Endothelial cell of umbilical vein (primary cell): ENCODE measurements at regions of chr11 and their contacts with region 1.

Region 1: DNA sequence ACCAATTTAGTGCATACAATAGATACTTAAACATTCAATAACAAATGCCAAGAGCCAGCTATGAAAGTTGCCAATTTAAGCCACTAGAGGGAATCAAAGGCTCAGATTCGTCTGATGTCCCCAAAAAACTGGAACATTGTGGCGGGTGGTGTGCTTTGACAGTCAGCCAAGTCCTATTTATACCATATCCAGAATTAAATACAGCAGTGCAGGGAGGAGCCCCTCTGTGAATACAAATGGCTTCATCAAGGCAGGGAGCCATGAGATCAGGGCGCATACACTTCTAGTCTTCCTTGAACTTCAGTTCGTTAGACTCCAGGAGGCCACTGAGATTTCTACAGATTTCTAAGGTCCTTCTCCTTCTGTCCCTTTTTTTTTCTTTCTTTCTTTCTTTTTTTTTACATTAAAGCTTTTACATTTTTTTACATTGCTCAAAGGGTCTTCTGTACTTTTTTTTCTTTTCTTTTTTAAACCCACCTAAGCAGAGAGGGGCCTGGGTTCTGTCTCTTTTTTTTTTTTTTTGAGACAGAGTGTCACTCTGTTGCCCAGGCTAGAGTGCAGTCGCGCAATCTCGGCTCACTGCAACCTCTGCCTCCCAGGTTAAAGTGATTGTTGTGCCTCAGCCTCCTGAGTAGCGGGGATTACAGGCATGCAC is 41.5 kb upstream of the HSPA8 start:
- DNase-seq: peak; percentile 75
- H3K4me3 ChIP-seq: no peak overlapping the region
- H3K27ac ChIP-seq: no peak overlapping the region
- H3K4me1 ChIP-seq: peaks cover 2% of the 10 kb centered on the region
- H3K27me3 ChIP-seq: no peaks in the 10 kb centered on the region
- CTCF ChIP-seq: peak; percentile 58 to 62
- POLR2A ChIP-seq: no peak

Region 2: DNA sequence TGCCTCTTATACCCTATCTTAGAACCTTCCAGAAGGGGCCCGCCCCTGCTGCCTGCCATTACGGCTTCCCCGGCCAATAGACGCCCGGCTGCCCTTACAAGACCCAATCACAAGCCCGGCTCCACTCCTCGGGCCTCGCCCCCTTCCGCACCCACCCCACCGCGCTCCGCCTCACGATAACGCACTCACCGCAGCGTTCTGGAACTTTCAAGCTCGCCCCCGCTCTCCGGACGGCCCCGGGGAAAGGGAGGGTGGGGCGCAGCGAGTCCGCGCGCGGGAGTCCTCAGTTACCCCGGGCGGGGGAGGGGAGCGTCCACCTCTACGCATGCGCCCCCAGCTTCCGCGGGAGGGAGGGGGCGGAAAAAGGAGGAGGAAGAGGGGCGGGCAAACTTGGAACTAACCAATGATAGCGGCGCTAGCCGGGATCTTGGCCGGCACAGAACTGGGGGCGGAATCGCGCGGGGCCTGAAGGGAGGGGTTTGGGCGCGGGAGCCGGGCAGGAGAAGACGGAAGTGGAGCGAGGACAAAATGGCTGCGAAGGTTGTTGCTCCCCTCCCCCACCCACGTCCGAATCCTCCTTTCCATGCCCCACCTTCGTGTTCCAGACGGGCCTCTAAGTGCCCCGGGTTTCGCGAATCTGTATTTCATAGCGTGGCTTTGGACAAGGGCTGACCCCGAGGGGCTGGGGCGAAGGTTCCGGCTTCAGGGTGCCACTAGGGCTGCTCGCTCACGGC is 41.1 kb before region 1 on chr11:
- CTCF ChIA-PET with region 1: interaction called, 10 read pairs
- POLR2A ChIA-PET with region 1: interaction called, 5 read pairs
- dilution Hi-C with region 1: no loop called
- intact Hi-C with region 1: loop called (anchors 1 kb)
- DNase-seq: peak; percentile 100
- H3K4me3 ChIP-seq: peak overlapping the region; percentile 66 to 95 (median 91)
- H3K27ac ChIP-seq: peak overlapping the region; percentile 96
- H3K4me1 ChIP-seq: peaks cover 29% of the 10 kb centered on the region
- H3K27me3 ChIP-seq: no peaks in the 10 kb centered on the region
- CTCF ChIP-seq: no peak
- POLR2A ChIP-seq: no peak

Region 3: GRCh38 chr11:123235117-123235655 is 131.7 kb after region 1 on chr11:
- CTCF ChIA-PET with region 1: interaction called, 21 read pairs
- POLR2A ChIA-PET with region 1: no interaction called
- dilution Hi-C with region 1: no loop called
- intact Hi-C with region 1: no loop called
- DNase-seq: peak; percentile 41
- H3K4me3 ChIP-seq: no peak overlapping the region
- H3K27ac ChIP-seq: no peak overlapping the region
- H3K4me1 ChIP-seq: no peaks in the 10 kb centered on the region
- H3K27me3 ChIP-seq: no peaks in the 10 kb centered on the region
- CTCF ChIP-seq: peak; percentile 64 to 68
- POLR2A ChIP-seq: no peak

Region 4: GRCh38 chr11:123261345-123262106 is 158.1 kb after region 1 on chr11:
- CTCF ChIA-PET with region 1: interaction called, 260 read pairs
- POLR2A ChIA-PET with region 1: no interaction called
- dilution Hi-C with region 1: loop called (anchors 25 kb)
- intact Hi-C with region 1: loop called (anchors 1 kb)
- DNase-seq: peak; percentile 68
- H3K4me3 ChIP-seq: peak overlapping the region in 1 of 3 experiments; percentile 38
- H3K27ac ChIP-seq: no peak overlapping the region
- H3K4me1 ChIP-seq: no peaks in the 10 kb centered on the region
- H3K27me3 ChIP-seq: peaks cover 4 to 5% of the 10 kb centered on the region in 2 experiments
- CTCF ChIP-seq: peak; percentile 94 to 98
- POLR2A ChIP-seq: no peak

Region 5: DNA sequence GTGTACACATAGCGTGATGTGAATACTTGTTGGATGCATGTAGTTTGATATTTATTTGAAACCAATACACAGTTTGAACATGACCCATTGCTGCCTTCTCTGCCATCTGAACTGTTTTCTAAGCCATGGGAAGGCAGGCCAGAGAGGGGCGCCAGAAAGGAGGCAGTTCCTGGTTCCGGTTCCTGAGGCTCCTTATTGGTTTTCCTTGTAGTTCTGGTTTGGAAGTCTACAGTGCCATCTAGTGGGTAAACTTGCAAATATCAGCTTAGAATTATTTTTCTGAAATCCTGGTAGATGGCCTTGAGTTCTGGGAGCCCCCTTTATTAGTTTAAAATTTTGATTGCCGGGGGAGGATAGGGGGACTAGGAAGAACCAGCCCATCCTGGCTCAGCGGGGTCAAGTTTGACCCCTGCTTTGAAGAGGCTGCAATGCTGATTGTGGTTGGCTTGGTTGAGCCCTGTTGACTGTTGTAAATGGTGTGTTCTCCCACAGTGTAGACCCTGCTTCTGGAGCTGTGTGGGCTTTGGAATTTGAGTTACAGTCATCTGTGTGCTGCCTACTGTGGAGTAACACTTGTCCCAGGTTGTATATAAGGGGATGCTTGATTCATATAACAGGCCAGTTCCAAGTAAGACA is 375.0 kb after region 1 on chr11:
- CTCF ChIA-PET with region 1: interaction called, 25 read pairs
- POLR2A ChIA-PET with region 1: no interaction called
- dilution Hi-C with region 1: no loop called
- intact Hi-C with region 1: loop called (anchors 1 kb)
- DNase-seq: peak; percentile 76
- H3K4me3 ChIP-seq: no peak overlapping the region
- H3K27ac ChIP-seq: no peak overlapping the region
- H3K4me1 ChIP-seq: peaks cover 25% of the 10 kb centered on the region
- H3K27me3 ChIP-seq: no peaks in the 10 kb centered on the region
- CTCF ChIP-seq: peak; percentile 54 to 58
- POLR2A ChIP-seq: no peak

Region 6: GRCh38 chr11:123702139-123702538 is 598.7 kb after region 1 on chr11:
- CTCF ChIA-PET with region 1: interaction called, 16 read pairs
- POLR2A ChIA-PET with region 1: no interaction called
- dilution Hi-C with region 1: no loop called
- intact Hi-C with region 1: loop called (anchors 5 kb)
- DNase-seq: no peak
- H3K4me3 ChIP-seq: no peak overlapping the region
- H3K27ac ChIP-seq: no peak overlapping the region
- H3K4me1 ChIP-seq: no peaks in the 10 kb centered on the region
- H3K27me3 ChIP-seq: no peaks in the 10 kb centered on the region
- CTCF ChIP-seq: no peak
- POLR2A ChIP-seq: no peak